Adrenal gland (tissue), 19 donors: ENCODE measurements at regions of chr7 and their contacts with region 1.

Region 1: GRCh38 chr7:73742693-73743595 is 4.3 kb upstream of the ABHD11 start:
- DNase-seq: peak in 4 of 7 donors; percentile 21 to 70 (median 27)
- H3K4me3 ChIP-seq: no peak overlapping the region
- H3K27ac ChIP-seq: no peak overlapping the region
- H3K4me1 ChIP-seq: peaks cover 2 to 4% of the 10 kb centered on the region in 2 donors
- H3K27me3 ChIP-seq: no peaks in the 10 kb centered on the region
- CTCF ChIP-seq: no peak
- POLR2A ChIP-seq: no peak

Region 2: GRCh38 chr7:73817121-73817520 is 74.2 kb after region 1 on chr7:
- intact Hi-C with region 1: loop called in 1 of 2 experiments (anchors 5 kb)
- DNase-seq: no peak
- H3K4me3 ChIP-seq: no peak overlapping the region
- H3K27ac ChIP-seq: no peak overlapping the region
- H3K4me1 ChIP-seq: no peaks in the 10 kb centered on the region
- H3K27me3 ChIP-seq: no peaks in the 10 kb centered on the region
- CTCF ChIP-seq: no peak
- POLR2A ChIP-seq: no peak